ENCODE measurements at regions of chr1 and their contacts with region 1.

Region 1: DNA sequence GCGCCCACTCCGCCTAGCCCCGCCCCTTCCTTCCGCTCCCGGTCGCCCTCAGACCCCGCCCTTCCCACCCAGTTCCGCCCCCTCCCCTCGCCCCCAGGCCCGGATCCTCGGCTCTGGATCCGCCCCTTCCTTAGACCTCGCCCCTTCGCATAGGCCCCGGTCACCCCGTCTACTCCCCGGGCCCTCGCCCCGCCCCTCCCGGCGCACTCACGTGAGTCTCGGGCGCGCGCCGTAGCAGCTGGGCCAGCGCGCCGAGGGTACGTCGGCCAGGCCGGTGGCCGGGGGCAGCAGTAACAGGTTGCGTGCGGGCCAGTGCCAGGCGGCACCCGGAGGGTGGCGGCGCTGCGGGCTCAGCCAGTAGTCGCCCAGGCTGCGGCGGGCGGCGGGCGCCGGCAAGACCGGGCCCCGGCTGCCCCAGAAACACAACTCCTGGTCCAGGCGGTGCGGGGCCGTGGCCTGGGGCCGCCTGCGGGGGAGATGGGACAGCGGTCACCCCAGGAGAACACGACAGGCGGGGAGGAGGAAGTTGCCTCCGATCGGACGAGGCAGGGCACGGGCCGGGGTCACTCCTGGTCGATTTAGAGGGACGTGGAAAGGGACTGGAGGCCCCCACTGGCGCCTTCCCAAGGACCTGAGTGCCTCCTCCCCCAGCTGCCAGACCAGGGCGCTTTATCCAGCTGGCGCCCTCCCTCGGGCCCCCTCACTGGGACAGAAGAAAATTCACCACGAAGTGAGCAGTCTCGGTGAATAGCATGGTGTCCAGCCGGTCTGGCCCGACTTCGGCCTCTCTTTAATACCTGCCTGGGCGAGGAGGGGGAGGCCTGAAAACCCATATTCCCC is 10.7 kb downstream of the FAM229A start:
- DNase-seq: peak; percentile 83 to 93 (median 92)
- ATAC-seq: peak; percentile 97
- H3K4me3 ChIP-seq: peak overlapping the region; percentile 62
- H3K4me3 Mint-ChIP-seq: peak overlapping the region; percentile 68 to 90 (median 85)
- H3K27ac ChIP-seq: peak overlapping the region; percentile 75
- H3K27ac Mint-ChIP-seq: peak overlapping the region; percentile 63 to 96 (median 91)
- H3K4me1 ChIP-seq: peaks cover 4 to 19% of the 10 kb centered on the region in 2 donors
- H3K4me1 Mint-ChIP-seq: peaks cover 35 to 65% (median 53%) of the 10 kb centered on the region in 7 donors
- H3K27me3 ChIP-seq: no peaks in the 10 kb centered on the region
- H3K27me3 Mint-ChIP-seq: peaks cover 0 to under 1% (median 0%) of the 10 kb centered on the region in 5 donors

Region 2: GRCh38 chr1:31715087-31715872 is 636.3 kb before region 1 on chr1:
- CTCF ChIA-PET with region 1: no interaction called
- POLR2A ChIA-PET with region 1: no interaction called
- intact Hi-C with region 1: no loop called
- DNase-seq: peak in 1 of 9 donors; percentile 45
- ATAC-seq: peak; percentile 66
- H3K4me3 ChIP-seq: peak overlapping the region; percentile 13
- H3K4me3 Mint-ChIP-seq: peak overlapping the region; percentile 42 to 83 (median 73)
- H3K27ac ChIP-seq: no peak overlapping the region
- H3K27ac Mint-ChIP-seq: no peak overlapping the region
- H3K4me1 ChIP-seq: peaks cover 3 to 16% of the 10 kb centered on the region in 2 donors
- H3K4me1 Mint-ChIP-seq: peaks cover 6 to 19% (median 16%) of the 10 kb centered on the region in 7 donors
- H3K27me3 ChIP-seq: peaks cover 2 to 10% of the 10 kb centered on the region in 2 donors
- H3K27me3 Mint-ChIP-seq: peaks cover 59 to 71% (median 64%) of the 10 kb centered on the region in 5 donors

Region 3: GRCh38 chr1:32200226-32201010 is 151.2 kb before region 1 on chr1 and contains the start of gene CCDC28B:
- CTCF ChIA-PET with region 1: no interaction called
- POLR2A ChIA-PET with region 1: interaction called, 4 read pairs
- intact Hi-C with region 1: loop called (anchors 1 kb)
- DNase-seq: peak; percentile 35 to 71 (median 62)
- ATAC-seq: peak; percentile 59
- H3K4me3 ChIP-seq: peak within 1 kb of the TSS; percentile 96
- H3K4me3 Mint-ChIP-seq: peak within 1 kb of the TSS; percentile 78 to 99 (median 94)
- H3K27ac ChIP-seq: peak within 1 kb of the TSS; percentile 99
- H3K27ac Mint-ChIP-seq: peak within 1 kb of the TSS; percentile 72 to 98 (median 91)
- H3K4me1 ChIP-seq: peaks cover 32 to 35% of the 10 kb centered on the region in 2 donors
- H3K4me1 Mint-ChIP-seq: peaks cover 41 to 73% (median 60%) of the 10 kb centered on the region in 7 donors
- H3K27me3 ChIP-seq: no peaks in the 10 kb centered on the region
- H3K27me3 Mint-ChIP-seq: no peaks in the 10 kb centered on the region
- total RNA-seq, gene CCDC28B: 6.2 to 39.0 (median 8.7) TPM

Region 4: DNA sequence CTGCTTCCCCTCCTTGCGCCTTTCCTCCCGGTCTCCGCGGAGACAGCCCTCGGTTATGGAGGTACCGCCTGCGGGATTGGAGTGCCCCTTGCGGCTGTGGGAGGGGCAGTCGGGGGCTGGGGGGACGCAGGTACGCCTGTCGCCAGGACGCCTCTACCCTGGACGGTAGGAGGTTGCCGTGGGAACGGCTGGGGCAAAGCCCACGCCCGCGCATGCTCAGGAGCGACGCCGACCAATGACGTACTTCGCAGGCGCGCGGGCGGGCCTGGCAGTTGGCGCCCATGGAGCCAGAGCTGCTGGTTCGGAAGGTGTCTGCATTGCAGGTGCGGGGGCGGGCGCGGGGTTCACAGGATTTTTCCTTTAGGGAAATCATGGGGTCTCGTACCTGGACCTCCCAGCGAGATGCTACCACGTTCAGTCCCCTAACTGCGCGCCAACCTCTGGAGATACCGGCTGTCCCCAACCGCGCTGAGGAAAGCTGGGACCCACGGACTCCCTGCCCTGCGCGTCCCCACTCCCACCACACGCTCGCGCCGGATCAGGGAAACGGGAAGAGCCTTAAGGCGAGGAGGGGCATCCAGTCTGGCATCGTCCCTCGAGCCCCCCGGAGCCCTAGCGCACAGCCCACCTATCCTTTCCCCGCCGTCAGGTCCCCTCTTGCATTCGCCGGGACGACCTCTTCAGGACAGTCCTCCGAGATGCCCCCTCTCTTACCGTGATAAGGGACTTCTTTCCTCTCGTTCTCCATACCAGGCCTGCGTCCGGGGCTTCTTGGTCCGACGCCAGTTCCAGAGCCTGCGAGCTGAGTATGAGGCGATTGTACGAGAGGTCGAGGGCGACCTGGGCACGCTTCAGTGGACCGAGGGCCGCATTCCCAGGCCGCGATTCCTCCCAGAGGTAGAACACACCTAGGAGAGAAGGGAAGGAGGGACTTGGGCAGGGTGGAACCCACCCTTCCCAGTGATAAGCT is 145.9 kb before region 1 on chr1 and contains the start of gene IQCC:
- CTCF ChIA-PET with region 1: no interaction called
- POLR2A ChIA-PET with region 1: interaction called, 4 read pairs
- intact Hi-C with region 1: loop called (anchors 1 kb)
- DNase-seq: peak; percentile 77 to 89 (median 83)
- ATAC-seq: peak; percentile 77
- H3K4me3 ChIP-seq: peak within 1 kb of the TSS; percentile 81
- H3K4me3 Mint-ChIP-seq: peak within 1 kb of the TSS; percentile 80 to 91 (median 88)
- H3K27ac ChIP-seq: peak within 1 kb of the TSS; percentile 80
- H3K27ac Mint-ChIP-seq: peak within 1 kb of the TSS; percentile 42 to 95 (median 86)
- H3K4me1 ChIP-seq: peaks cover 18 to 28% of the 10 kb centered on the region in 2 donors
- H3K4me1 Mint-ChIP-seq: peaks cover 17 to 45% (median 33%) of the 10 kb centered on the region in 7 donors
- H3K27me3 ChIP-seq: no peaks in the 10 kb centered on the region
- H3K27me3 Mint-ChIP-seq: no peaks in the 10 kb centered on the region
- total RNA-seq, gene IQCC: 2.3 to 4.6 (median 2.5) TPM

Region 5: GRCh38 chr1:32240140-32240951 is 111.3 kb before region 1 on chr1:
- CTCF ChIA-PET with region 1: interaction called, 4 read pairs
- POLR2A ChIA-PET with region 1: interaction called, 4 read pairs
- intact Hi-C with region 1: loop called in 1 of 2 experiments (anchors 1 kb)
- DNase-seq: peak in 7 of 9 donors; percentile 33 to 73 (median 57)
- ATAC-seq: peak; percentile 78
- H3K4me3 ChIP-seq: peak overlapping the region; percentile 94
- H3K4me3 Mint-ChIP-seq: peak overlapping the region; percentile 87 to 93 (median 91)
- H3K27ac ChIP-seq: peak overlapping the region; percentile 68
- H3K27ac Mint-ChIP-seq: peak overlapping the region in 8 of 9 donors; percentile 40 to 92 (median 83)
- H3K4me1 ChIP-seq: peaks cover 8 to 17% of the 10 kb centered on the region in 2 donors
- H3K4me1 Mint-ChIP-seq: peaks cover 6 to 31% (median 22%) of the 10 kb centered on the region in 7 donors
- H3K27me3 ChIP-seq: no peaks in the 10 kb centered on the region
- H3K27me3 Mint-ChIP-seq: no peaks in the 10 kb centered on the region

Region 6: GRCh38 chr1:32321712-32322291 is 29.8 kb before region 1 on chr1:
- CTCF ChIA-PET with region 1: no interaction called
- POLR2A ChIA-PET with region 1: interaction called, 5 read pairs
- intact Hi-C with region 1: loop called in 1 of 2 experiments (anchors 1 kb)
- DNase-seq: peak in 7 of 9 donors; percentile 37 to 73 (median 57)
- ATAC-seq: peak; percentile 90
- H3K4me3 ChIP-seq: peak overlapping the region; percentile 33
- H3K4me3 Mint-ChIP-seq: peak overlapping the region; percentile 58 to 85 (median 74)
- H3K27ac ChIP-seq: peak overlapping the region; percentile 58
- H3K27ac Mint-ChIP-seq: peak overlapping the region; percentile 62 to 96 (median 94)
- H3K4me1 ChIP-seq: peaks cover 33 to 46% of the 10 kb centered on the region in 2 donors
- H3K4me1 Mint-ChIP-seq: peaks cover 27 to 69% (median 47%) of the 10 kb centered on the region in 7 donors
- H3K27me3 ChIP-seq: no peaks in the 10 kb centered on the region
- H3K27me3 Mint-ChIP-seq: no peaks in the 10 kb centered on the region

Region 7: GRCh38 chr1:32361674-32362473 is 10.3 kb after region 1 on chr1:
- CTCF ChIA-PET with region 1: no interaction called
- POLR2A ChIA-PET with region 1: interaction called, 11 read pairs
- intact Hi-C with region 1: loop called in 1 of 2 experiments (anchors 1 kb)
- DNase-seq: peak in 2 of 9 donors; percentile 18 to 38
- ATAC-seq: peak; percentile 62
- H3K4me3 ChIP-seq: no peak overlapping the region
- H3K4me3 Mint-ChIP-seq: peak overlapping the region; percentile 2 to 80 (median 63)
- H3K27ac ChIP-seq: peak overlapping the region; percentile 43
- H3K27ac Mint-ChIP-seq: peak overlapping the region in 2 of 9 donors; percentile 42 to 50
- H3K4me1 ChIP-seq: peaks cover 7 to 8% of the 10 kb centered on the region in 2 donors
- H3K4me1 Mint-ChIP-seq: peaks cover 21 to 39% (median 27%) of the 10 kb centered on the region in 7 donors
- H3K27me3 ChIP-seq: no peaks in the 10 kb centered on the region
- H3K27me3 Mint-ChIP-seq: peaks cover 0 to 10% (median 5%) of the 10 kb centered on the region in 5 donors

Region 8: DNA sequence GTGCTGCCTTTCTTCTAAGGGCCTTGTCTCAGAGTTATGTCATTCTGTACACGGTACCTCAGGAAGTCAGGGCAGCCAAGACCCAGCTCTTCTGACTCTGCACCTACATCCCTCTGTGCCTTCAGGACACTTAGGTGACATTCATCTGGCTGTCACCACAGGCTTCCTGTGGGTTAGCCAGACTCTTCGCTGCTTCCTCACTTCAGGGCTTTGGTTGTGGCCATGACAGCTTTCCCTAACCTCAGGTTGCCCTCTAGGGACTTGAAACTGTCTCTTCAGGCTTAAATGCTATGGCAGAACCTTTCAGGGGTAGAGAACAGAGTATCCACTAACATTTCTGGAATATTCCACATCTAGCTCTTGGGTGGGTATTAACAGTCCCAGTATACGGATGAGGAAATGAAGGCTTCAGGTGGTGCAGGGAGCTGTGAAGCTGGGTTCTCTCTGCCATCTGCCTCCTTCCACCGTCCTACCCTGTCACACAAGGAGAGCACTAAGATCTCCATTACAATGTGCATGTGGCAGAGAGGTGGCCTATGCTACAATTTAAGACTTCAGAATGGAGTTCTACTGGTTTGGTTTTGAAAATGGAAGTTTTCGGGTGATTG is 20.6 kb after region 1 on chr1:
- CTCF ChIA-PET with region 1: no interaction called
- POLR2A ChIA-PET with region 1: interaction called, 7 read pairs
- intact Hi-C with region 1: loop called in 1 of 2 experiments (anchors 1 kb)
- DNase-seq: peak; percentile 22 to 78 (median 68)
- ATAC-seq: peak; percentile 88
- H3K4me3 ChIP-seq: no peak overlapping the region
- H3K4me3 Mint-ChIP-seq: peak overlapping the region in 2 of 10 donors; percentile 6 to 9
- H3K27ac ChIP-seq: peak overlapping the region; percentile 20
- H3K27ac Mint-ChIP-seq: peak overlapping the region in 7 of 9 donors; percentile 1 to 75 (median 57)
- H3K4me1 ChIP-seq: peaks cover 12% of the 10 kb centered on the region in 2 donors
- H3K4me1 Mint-ChIP-seq: peaks cover 15 to 22% (median 20%) of the 10 kb centered on the region in 7 donors
- H3K27me3 ChIP-seq: no peaks in the 10 kb centered on the region
- H3K27me3 Mint-ChIP-seq: no peaks in the 10 kb centered on the region

Region 9: GRCh38 chr1:32400876-32401631 is 49.4 kb after region 1 on chr1:
- CTCF ChIA-PET with region 1: no interaction called
- POLR2A ChIA-PET with region 1: no interaction called
- intact Hi-C with region 1: no loop called
- DNase-seq: peak in 8 of 9 donors; percentile 25 to 61 (median 34)
- ATAC-seq: peak; percentile 79
- H3K4me3 ChIP-seq: no peak overlapping the region
- H3K4me3 Mint-ChIP-seq: peak overlapping the region in 2 of 10 donors; percentile 21 to 31
- H3K27ac ChIP-seq: no peak overlapping the region
- H3K27ac Mint-ChIP-seq: no peak overlapping the region
- H3K4me1 ChIP-seq: no peaks in the 10 kb centered on the region
- H3K4me1 Mint-ChIP-seq: peaks cover 0 to 5% (median 4%) of the 10 kb centered on the region in 7 donors
- H3K27me3 ChIP-seq: no peaks in the 10 kb centered on the region
- H3K27me3 Mint-ChIP-seq: peaks cover 0 to 20% (median 0%) of the 10 kb centered on the region in 5 donors

Measured in naive thymus-derived CD4-positive, alpha-beta T cell (primary cell).